WTC11 (cell line): ENCODE measurements at regions of chr4 and their contacts with region 1.

Region 1: DNA sequence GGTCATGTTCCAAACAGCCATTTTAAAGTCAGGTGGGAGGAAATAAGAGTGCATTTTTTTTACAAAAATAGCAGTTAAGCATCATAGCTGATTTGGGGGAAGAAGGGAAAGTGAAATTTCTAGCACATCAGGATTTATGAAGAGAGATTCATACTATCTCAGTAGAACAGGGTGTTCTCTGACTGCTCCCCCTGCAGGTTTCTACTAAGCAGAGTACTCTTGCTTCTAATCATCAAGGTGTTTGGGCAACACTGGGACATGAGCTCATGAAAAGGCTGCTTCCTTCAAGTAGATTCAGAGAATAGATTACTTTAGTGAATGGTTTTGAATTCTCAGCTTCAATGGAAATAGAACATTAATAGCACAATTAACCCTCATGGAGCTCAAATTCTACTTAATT is 591.4 kb upstream of the PCDH10 start:
- DNase-seq: no peak
- ATAC-seq: peak; percentile 90
- H3K4me3 Mint-ChIP-seq: no peak overlapping the region
- H3K27ac Mint-ChIP-seq: no peak overlapping the region
- H3K4me1 Mint-ChIP-seq: peaks cover 4% of the 10 kb centered on the region
- H3K27me3 Mint-ChIP-seq: no peaks in the 10 kb centered on the region
- CTCF ChIP-seq: 0 out of 2 replicates have a peak, but pooled peaks have one; percentile 13

Region 2: GRCh38 chr4:132513491-132513890 is 44.2 kb before region 1 on chr4:
- CTCF ChIA-PET with region 1: interaction called, 10 read pairs
- POLR2A ChIA-PET with region 1: no interaction called
- DNase-seq: no peak
- ATAC-seq: peak; percentile 30
- H3K4me3 Mint-ChIP-seq: no peak overlapping the region
- H3K27ac Mint-ChIP-seq: peak overlapping the region; percentile 63
- H3K4me1 Mint-ChIP-seq: peaks cover 53% of the 10 kb centered on the region
- H3K27me3 Mint-ChIP-seq: no peaks in the 10 kb centered on the region
- CTCF ChIP-seq: no peak